Activated CD4-positive, alpha-beta T cell treated with anti-CD3 and anti-CD28 coated beads for 36 hours (primary cell): ENCODE measurements at regions of chr1 and their contacts with region 1.

Region 1: GRCh38 chr1:214328770-214329469 is 48.0 kb downstream of the SMYD2 start:
- DNase-seq: peak; percentile 88
- ATAC-seq: peak; percentile 93
- H3K4me3 Mint-ChIP-seq: no peak overlapping the region
- H3K27ac Mint-ChIP-seq: peak overlapping the region; percentile 23
- H3K4me1 Mint-ChIP-seq: peaks cover 3% of the 10 kb centered on the region
- H3K27me3 Mint-ChIP-seq: no peaks in the 10 kb centered on the region

Region 2: GRCh38 chr1:213374369-213374768 is 954.6 kb before region 1 on chr1:
- CTCF ChIA-PET with region 1: no interaction called
- POLR2A ChIA-PET with region 1: no interaction called
- intact Hi-C with region 1: loop called in 1 of 2 experiments (anchors 1 kb)
- DNase-seq: peak; percentile 82
- ATAC-seq: peak; percentile 60
- H3K4me3 Mint-ChIP-seq: no peak overlapping the region
- H3K27ac Mint-ChIP-seq: no peak overlapping the region
- H3K4me1 Mint-ChIP-seq: no peaks in the 10 kb centered on the region
- H3K27me3 Mint-ChIP-seq: no peaks in the 10 kb centered on the region

Region 3: GRCh38 chr1:214261206-214262123 is 67.5 kb before region 1 on chr1:
- CTCF ChIA-PET with region 1: interaction called, 342 read pairs
- POLR2A ChIA-PET with region 1: interaction called, 3 read pairs
- intact Hi-C with region 1: loop called (anchors 1 kb)
- DNase-seq: peak; percentile 91
- ATAC-seq: peak; percentile 81
- H3K4me3 Mint-ChIP-seq: no peak overlapping the region
- H3K27ac Mint-ChIP-seq: peak overlapping the region; percentile 34
- H3K4me1 Mint-ChIP-seq: peaks cover 15% of the 10 kb centered on the region
- H3K27me3 Mint-ChIP-seq: peaks cover 45% of the 10 kb centered on the region

Region 4: DNA sequence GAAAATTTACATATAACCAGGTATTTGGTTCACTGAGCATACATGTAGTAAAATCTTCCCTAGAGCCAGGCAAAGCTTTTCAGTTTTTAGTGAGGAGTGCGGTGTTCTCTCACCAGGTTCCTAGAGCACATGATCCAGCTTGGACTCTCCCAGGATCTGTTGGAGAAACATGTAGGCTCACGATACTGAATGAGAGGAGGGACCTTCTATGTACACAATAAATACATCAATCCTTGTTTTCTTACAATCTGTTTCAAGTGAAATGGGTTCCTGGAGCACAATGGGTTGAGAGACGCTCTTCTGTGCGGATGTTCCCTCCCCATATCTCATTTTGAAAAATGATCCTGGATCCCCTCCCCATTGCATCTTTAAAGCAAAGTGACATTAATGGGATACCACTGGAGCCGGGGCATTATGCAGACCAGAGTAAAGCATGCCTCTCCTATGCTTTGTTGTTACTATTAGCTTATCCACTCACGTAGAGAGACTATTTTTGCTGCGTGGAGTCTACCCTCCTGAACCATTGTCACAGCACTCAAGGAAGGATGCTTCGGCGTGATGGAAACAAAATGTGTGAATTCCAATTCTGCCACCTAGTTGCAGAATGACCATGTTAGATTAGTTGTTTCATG is 28.7 kb before region 1 on chr1:
- CTCF ChIA-PET with region 1: interaction called, 11 read pairs
- POLR2A ChIA-PET with region 1: no interaction called
- intact Hi-C with region 1: no loop called
- DNase-seq: no peak
- ATAC-seq: no peak
- H3K4me3 Mint-ChIP-seq: no peak overlapping the region
- H3K27ac Mint-ChIP-seq: no peak overlapping the region
- H3K4me1 Mint-ChIP-seq: peaks cover 27% of the 10 kb centered on the region
- H3K27me3 Mint-ChIP-seq: no peaks in the 10 kb centered on the region

Region 5: DNA sequence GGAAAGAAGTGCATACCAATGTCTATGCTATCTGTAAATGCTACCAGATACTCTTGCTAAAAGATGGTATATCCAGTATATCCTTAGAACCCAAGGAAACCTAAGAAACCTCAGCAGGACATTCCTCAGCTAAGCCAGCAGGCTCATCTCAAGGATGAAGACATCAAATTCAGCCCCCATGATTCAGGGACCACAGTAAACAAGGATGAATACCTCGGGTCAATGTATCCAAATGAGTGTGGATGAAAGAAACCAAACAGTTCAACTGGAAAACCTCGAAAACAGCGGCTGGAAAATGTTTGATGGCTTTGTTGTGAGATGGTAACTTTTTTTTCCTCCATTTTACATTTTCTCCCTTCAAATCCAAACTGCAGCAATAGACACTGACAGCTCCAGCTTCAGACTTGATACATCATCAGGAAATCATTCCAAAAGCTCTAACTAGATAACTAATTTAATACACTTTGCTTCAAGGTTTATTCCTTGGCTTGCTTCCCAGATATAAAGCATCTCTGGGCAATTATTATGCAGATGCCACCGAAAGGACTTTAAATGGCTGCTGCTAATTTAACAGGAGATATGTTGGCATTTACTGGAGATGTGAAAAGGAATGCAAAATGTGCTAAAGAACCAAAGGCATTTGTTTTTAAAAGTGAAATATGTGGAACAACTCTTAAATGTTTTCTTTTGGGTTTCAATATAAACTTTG is 25.7 kb after region 1 on chr1:
- CTCF ChIA-PET with region 1: interaction called, 11 read pairs
- POLR2A ChIA-PET with region 1: no interaction called
- intact Hi-C with region 1: no loop called
- DNase-seq: no peak
- ATAC-seq: no peak
- H3K4me3 Mint-ChIP-seq: no peak overlapping the region
- H3K27ac Mint-ChIP-seq: no peak overlapping the region
- H3K4me1 Mint-ChIP-seq: no peaks in the 10 kb centered on the region
- H3K27me3 Mint-ChIP-seq: no peaks in the 10 kb centered on the region

Region 6: DNA sequence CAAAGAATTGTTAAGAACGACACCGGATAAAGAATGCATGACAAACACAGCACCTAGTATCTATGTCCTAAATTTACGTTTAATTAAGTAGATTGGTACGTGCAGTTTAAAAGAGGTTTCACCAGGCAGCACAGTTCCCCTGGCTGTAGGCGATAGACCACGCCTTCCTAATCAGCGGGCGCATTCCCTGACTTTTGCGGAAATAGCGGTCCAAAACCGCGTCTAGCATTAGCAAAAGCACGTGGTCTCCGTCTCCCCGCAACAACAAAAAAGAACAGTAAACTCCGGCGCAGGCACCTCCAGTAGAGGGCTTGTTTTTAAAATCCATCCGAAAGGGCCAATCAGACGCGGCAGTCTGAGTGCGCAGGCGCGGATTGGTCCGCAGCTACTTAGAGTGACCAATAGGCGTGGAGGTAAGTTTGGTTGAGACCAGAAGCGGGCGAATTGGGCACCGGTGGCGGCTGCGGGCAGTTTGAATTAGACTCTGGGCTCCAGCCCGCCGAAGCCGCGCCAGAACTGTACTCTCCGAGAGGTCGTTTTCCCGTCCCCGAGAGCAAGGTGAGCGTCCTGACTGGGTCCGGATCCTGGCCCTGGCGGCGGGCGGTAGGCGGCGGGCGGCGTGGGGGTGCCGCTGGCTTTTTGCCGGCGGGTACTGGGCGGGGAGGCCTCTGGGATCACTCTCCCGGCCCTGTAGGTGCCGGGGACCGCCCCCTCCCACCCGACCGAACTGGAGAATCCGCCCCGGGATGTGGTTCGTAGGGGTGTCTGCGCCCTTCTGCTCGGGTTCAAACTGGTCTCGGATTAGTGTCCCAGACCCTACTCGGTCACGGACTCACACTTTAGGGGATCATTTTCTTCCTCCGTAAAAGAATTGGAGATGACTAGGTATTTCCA is 274.1 kb after region 1 on chr1 and contains the start of gene CENPF:
- CTCF ChIA-PET with region 1: interaction called, 5 read pairs
- POLR2A ChIA-PET with region 1: no interaction called
- intact Hi-C with region 1: loop called in 1 of 2 experiments (anchors 5 kb)
- DNase-seq: peak; percentile 96
- ATAC-seq: peak; percentile 98
- H3K4me3 Mint-ChIP-seq: peak within 1 kb of the TSS; percentile 95
- H3K27ac Mint-ChIP-seq: peak within 1 kb of the TSS; percentile 89
- H3K4me1 Mint-ChIP-seq: peaks cover 20% of the 10 kb centered on the region
- H3K27me3 Mint-ChIP-seq: no peaks in the 10 kb centered on the region
- total RNA-seq, gene CENPF: 102 to 107 TPM